Mammary epithelial cell (primary cell): ENCODE measurements at regions of chr16 and their contacts with region 1.

Region 1: DNA sequence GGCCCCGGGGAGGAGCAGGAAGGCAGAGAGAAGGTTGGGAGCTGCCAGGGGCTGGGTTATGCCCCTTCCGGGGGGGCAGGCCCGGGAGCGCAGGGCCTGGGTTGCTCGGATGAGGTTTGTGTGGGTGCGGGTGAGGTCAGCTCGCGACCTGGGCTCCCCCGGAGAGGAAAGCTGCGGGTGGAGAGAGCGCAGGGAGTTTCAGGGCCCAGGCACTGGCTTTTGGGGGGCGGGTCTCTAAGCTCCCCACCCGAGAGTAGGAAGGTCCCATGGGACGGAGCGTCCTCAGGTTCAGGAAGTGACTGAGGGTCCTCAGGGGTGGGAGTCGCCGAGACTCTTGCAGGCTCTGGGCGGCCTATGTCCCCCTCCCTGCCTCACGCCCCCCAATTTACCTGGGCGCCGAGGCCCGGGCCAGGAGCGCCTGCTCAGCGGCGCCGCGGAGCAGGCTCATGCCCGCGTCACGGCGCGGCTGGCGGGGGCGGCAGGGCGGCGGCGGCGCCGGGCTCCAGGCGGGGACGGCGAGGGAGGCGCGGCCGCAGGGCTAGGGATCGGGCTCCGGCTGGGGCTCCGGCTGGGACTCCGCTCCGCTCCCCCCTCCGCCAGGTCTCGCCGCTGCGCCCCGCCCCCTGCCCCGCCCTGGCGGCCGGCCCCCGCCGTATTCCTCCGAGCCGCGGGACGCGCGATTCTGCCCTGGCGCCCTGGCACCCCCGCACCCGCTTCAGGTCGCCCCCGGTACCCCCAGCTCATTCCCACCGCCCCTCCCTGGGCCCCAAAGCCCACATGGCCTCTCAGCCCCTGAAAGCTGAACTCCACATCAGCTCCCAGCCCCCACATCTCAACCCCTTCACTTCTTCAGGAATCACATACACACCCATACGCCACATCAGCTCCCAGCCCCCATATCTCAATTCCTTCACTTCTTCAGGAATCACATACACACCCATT is at the start of gene DOK4:
- DNase-seq: peak; percentile 74
- H3K4me3 ChIP-seq: peak within 1 kb of the TSS; percentile 71 to 81 (median 76)
- H3K27ac ChIP-seq: peak within 1 kb of the TSS; percentile 57
- H3K4me1 ChIP-seq: peaks cover 11% of the 10 kb centered on the region
- H3K27me3 ChIP-seq: no peaks in the 10 kb centered on the region
- CTCF ChIP-seq: no peak
- total RNA-seq, gene DOK4: 14.8 to 20.0 TPM

Region 2: GRCh38 chr16:57394444-57394843 is 91.7 kb before region 1 on chr16:
- CTCF ChIA-PET with region 1: no interaction called
- dilution Hi-C with region 1: loop called (anchors 5 kb)
- in situ Hi-C with region 1: no loop called
- intact Hi-C with region 1: no loop called
- DNase-seq: peak; percentile 54
- H3K4me3 ChIP-seq: no peak overlapping the region
- H3K27ac ChIP-seq: no peak overlapping the region
- H3K4me1 ChIP-seq: no peaks in the 10 kb centered on the region
- H3K27me3 ChIP-seq: no peaks in the 10 kb centered on the region
- CTCF ChIP-seq: no peak

Region 3: GRCh38 chr16:57447186-57447962 is 38.8 kb before region 1 on chr16 and contains the starts of genes CIAPIN1 and COQ9:
- CTCF ChIA-PET with region 1: no interaction called
- dilution Hi-C with region 1: no loop called
- in situ Hi-C with region 1: no loop called
- intact Hi-C with region 1: loop called (anchors 1 kb)
- DNase-seq: peak; percentile 92
- H3K4me3 ChIP-seq: peak within 1 kb of the TSS; percentile 86 to 98 (median 94)
- H3K27ac ChIP-seq: peak within 1 kb of the TSS; percentile 86
- H3K4me1 ChIP-seq: peaks cover 11% of the 10 kb centered on the region
- H3K27me3 ChIP-seq: no peaks in the 10 kb centered on the region
- CTCF ChIP-seq: no peak
- total RNA-seq, gene CIAPIN1: 60.8 to 69.9 TPM
- total RNA-seq, gene COQ9: 41.2 to 42.5 TPM

Region 4: DNA sequence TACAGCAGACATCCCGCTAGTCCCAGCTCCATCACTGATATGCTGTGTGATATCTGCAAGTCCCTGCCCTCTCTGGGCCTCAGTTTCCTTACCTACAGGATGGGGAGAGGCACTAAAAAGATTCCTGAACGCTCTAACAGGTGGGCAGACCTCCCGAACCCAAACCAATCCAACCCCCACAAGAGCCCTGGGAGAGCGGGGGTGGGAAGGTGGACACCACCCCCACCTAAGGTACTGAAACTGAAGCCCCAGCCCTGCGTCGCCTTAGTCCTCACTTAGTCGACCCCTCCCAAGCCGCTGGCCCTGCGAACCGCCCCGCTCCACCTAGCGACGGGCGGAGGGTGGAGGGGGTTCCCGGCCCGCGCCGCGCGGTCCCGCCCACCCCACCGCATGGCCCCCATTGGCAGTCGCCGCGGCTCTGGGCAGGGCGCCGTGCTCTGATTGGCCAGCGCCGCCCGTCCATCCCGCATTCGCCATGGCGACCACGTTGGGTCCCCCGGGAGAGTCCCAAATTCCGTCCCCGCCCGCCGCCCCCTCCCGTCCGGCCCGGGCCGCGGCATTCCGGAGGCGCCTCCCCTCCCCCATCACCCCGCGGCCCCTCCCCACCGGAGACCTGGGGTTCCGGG is 49.6 kb after region 1 on chr16:
- CTCF ChIA-PET with region 1: no interaction called
- dilution Hi-C with region 1: no loop called
- in situ Hi-C with region 1: no loop called
- intact Hi-C with region 1: loop called (anchors 2 kb)
- DNase-seq: peak; percentile 89
- H3K4me3 ChIP-seq: peak overlapping the region; percentile 68 to 84 (median 77)
- H3K27ac ChIP-seq: peak overlapping the region; percentile 58
- H3K4me1 ChIP-seq: peaks cover 11% of the 10 kb centered on the region
- H3K27me3 ChIP-seq: no peaks in the 10 kb centered on the region
- CTCF ChIP-seq: peak in 1 of 2 donors; percentile 32

Region 5: DNA sequence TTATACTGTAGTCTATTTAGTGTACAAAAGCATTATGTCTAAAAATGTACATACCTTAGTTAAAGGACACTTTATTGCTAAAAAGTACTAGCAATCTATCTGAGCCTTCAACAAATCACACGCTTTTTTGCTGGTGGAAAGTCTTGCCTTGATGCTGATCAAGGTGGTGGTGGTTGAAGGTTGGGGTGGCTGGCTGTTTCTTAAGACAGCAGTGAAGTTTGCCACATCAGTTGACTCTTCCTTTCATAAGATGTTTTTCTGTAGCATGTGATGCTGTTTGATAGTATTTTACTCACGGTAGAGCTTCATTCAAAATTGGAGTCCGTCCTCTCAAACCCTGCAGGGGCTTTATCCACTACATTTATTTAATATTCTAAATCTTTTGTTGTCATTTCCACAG is 64.9 kb after region 1 on chr16:
- CTCF ChIA-PET with region 1: no interaction called
- dilution Hi-C with region 1: no loop called
- in situ Hi-C with region 1: no loop called
- intact Hi-C with region 1: no loop called
- DNase-seq: no peak
- H3K4me3 ChIP-seq: no peak overlapping the region
- H3K27ac ChIP-seq: no peak overlapping the region
- H3K4me1 ChIP-seq: no peaks in the 10 kb centered on the region
- H3K27me3 ChIP-seq: no peaks in the 10 kb centered on the region
- CTCF ChIP-seq: no peak

Region 6: DNA sequence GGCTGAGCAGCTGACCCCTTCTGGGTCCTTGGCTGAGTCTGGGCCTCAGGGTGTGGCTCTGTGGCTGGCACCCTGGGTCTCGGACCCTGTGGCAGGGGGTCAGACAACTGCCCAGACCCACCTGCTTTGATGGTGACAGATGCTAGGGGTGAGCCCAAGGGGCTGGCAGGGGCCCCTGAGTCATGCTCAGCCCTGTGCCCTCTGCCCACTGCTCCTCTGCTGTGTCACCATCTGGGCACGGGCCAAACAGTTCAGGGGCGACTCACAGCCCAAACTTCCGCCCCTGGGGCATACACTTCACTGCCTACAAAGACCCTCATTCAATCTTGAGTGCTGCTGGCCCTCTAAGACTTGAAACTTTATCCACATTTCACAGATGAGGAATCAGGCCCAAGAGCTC is 148.0 kb after region 1 on chr16:
- CTCF ChIA-PET with region 1: no interaction called
- dilution Hi-C with region 1: loop called (anchors 5 kb)
- in situ Hi-C with region 1: no loop called
- intact Hi-C with region 1: no loop called
- DNase-seq: peak; percentile 65
- H3K4me3 ChIP-seq: no peak overlapping the region
- H3K27ac ChIP-seq: no peak overlapping the region
- H3K4me1 ChIP-seq: peaks cover 80% of the 10 kb centered on the region
- H3K27me3 ChIP-seq: no peaks in the 10 kb centered on the region
- CTCF ChIP-seq: no peak

Region 7: DNA sequence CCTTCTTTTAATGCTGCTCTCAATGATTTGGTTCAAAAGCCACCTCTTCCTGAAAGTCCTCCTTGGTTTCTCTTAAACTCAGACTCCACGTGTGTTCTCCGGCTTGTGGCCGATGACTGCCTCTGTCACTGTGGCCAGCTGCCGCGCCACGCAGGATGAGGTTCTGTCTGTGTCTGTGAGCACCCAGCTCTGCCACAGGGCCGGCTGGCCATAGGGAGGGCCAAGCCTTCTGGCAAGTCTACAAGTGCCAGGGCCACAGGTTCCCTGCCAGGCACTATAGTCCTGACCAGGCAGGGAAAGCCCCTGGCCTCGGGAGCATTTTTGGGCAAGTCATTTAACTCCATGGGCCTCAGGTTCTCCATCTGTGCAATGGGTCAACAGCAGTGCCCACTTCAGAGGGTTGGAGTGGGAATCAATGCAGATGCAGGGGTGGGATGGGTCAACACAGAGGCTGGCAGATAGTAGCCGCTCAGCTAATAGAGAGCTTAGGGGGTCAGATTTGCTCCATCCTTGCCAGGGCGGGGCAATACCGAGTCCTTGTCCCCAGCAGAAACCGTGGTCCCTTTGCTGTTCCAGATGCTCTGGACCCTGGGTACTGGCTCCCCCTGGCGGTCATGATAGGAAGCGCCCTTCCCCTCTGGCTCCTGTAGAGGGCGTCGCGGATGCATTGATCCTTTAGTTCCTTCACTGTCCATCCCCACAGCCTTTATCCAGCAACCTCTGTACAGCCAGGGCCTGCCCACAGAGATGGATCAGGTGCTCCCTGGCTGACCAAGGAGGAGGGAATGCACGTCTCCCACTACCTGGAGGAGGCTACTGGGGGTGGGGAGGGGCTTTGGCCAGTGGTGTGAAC is 162.6 kb after region 1 on chr16:
- CTCF ChIA-PET with region 1: no interaction called
- dilution Hi-C with region 1: no loop called
- in situ Hi-C with region 1: no loop called
- intact Hi-C with region 1: no loop called
- DNase-seq: peak; percentile 70
- H3K4me3 ChIP-seq: no peak overlapping the region
- H3K27ac ChIP-seq: no peak overlapping the region
- H3K4me1 ChIP-seq: peaks cover 52% of the 10 kb centered on the region
- H3K27me3 ChIP-seq: no peaks in the 10 kb centered on the region
- CTCF ChIP-seq: peak; percentile 100